GM13976 (cell line): ENCODE measurements at regions of chr4 and their contacts with region 1.

Region 1: DNA sequence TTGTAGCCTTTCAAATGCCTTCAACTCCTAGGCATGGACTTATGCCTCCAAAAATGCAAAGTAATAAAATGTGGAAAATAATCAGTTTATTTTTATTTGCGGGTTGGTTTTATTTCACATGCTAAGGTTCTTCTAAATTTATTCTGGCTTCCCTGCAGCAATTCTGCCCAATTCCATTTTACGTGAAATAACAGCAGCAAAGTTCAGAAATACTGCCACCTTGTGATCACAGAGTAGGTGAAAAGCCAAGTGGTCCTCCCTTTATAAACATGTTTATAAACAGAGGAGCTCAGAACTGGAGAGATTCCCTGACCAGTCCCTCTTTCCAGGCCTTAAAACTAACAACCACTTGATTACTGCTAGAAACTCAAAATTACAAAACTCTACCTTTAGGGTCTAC is 14.7 kb upstream of the DCHS2 start:
- DNase-seq: no peak
- CTCF ChIP-seq: peak; percentile 43

Region 2: GRCh38 chr4:153785910-153786721 is 720.1 kb before region 1 on chr4:
- in situ Hi-C with region 1: loop called (anchors 25 kb)
- DNase-seq: peak; percentile 44
- CTCF ChIP-seq: peak; percentile 16

Region 3: DNA sequence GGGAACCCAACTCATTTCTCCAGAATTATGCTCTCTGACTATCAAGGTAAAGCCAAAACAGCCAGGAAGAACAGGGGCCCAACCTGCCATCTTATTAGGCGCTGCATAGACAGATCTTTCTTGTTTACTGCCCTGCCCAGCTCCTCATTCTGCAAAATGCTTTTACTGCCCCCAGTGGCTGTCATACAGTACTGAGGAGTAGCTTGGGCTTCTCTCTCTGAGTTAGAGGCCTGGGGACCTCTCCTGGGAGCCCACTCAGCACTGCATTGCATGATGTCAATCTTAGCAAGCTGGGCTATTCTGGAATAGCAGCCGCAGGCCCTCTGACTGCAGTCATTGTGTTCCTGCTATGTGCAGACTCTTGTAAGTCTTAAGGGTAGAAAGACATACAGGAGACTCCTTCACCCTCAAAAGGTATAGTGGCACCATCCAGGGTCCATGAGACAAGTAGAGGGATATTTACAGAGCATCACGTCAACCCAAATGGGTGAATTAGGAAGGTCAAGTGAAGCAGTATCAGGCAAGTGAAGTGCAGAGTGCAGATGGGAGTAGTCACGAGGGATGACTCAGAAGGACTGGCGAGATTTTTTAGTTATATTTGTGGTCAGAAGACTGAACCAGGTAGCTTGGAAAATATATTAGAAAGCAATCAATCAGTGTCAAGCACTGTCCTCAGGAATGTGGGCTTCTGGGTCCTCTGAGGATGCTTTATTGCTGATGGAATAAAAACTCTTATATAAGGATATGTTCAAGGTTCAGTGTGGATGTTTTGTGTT is 423.3 kb before region 1 on chr4:
- in situ Hi-C with region 1: no loop called
- DNase-seq: no peak
- CTCF ChIP-seq: peak; percentile 12

Region 4: GRCh38 chr4:154332681-154333421 is 173.4 kb before region 1 on chr4:
- in situ Hi-C with region 1: loop called (anchors 10 kb)
- DNase-seq: peak; percentile 17
- CTCF ChIP-seq: no peak

Region 5: DNA sequence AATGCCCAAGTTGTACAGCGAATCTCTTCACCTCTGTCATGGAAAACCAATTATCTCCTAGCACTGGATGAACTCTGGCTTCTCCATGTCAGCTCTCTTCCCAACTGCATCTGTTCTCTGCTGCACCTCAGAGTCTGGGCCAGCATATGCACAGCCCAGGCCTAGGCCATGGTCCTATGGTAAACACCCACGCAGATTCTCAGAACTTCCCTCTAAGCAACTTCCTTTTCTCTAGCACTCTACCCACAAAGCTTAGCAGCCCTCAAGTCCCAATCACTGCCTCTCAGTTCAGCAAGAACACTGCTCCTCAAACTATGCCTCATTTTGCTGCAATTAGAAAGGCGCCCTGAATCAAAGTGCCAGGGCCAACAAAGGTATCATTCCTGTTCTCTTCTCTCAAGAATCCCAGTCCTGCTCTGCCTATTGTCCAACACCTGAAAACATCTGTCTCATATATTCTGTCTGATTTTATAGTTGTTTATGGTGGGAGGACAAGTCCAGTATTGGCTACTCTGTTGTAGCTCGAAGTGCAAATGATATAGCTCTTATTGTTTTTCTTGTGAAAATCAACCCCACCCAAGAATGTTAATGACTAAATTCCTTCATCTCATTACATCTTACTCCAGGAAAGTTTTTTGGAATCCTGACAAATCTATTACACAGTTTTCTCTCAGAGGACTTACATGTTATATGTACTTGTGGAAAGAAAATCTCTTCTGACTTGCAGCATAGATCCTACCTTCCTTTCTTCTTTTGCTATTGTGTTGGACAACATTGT is 100.0 kb before region 1 on chr4:
- in situ Hi-C with region 1: loop called (anchors 10 kb)
- DNase-seq: no peak
- CTCF ChIP-seq: no peak

Region 6: GRCh38 chr4:154421618-154422017 is 84.6 kb before region 1 on chr4:
- in situ Hi-C with region 1: no loop called
- DNase-seq: no peak
- CTCF ChIP-seq: no peak